ENCODE measurements at regions of chr5 and their contacts with region 1.

Region 1: GRCh38 chr5:54310433-54311175 is at the start of gene ARL15:
- DNase-seq: peak; percentile 97
- H3K4me3 ChIP-seq: peak within 1 kb of the TSS; percentile 75 to 91 (median 79)
- H3K27ac ChIP-seq: peak within 1 kb of the TSS; percentile 79
- H3K4me1 ChIP-seq: peaks cover 12% of the 10 kb centered on the region
- H3K27me3 ChIP-seq: no peaks in the 10 kb centered on the region
- CTCF ChIP-seq: peak in 1 of 2 donors; percentile 1
- total RNA-seq, gene ARL15: 31.5 to 40.0 TPM

Region 2: DNA sequence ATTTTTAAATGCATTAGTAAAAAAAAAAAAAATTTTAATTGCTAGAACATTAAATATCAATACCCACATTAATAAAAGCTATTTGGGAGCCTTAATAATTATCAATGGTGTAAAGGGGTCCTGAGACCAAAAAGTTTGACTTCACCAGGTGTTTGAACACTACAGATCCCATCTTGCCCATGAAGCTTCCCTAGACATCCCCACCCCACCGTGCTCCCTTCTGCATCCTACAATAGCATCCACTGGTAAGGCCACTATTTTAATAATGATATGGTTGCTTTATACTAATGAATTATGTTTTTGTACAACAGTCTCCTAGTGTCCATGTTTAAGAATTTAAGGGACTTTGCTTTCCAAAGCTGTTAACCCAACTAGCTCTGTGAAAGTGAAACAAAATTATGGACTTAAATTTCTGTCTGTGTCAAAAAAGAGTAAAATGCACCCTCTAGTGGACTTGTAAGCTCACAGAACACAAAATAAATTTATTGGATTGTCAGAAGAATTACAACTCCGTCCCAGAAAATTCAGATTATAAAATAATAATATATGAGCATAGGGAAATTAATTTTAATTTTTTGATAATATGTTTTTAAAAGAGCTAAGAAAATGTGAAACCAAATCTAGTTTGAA is 76.2 kb before region 1 on chr5:
- CTCF ChIA-PET with region 1: interaction called, 12 read pairs
- dilution Hi-C with region 1: no loop called
- in situ Hi-C with region 1: no loop called
- intact Hi-C with region 1: no loop called
- DNase-seq: peak; percentile 8
- H3K4me3 ChIP-seq: no peak overlapping the region
- H3K27ac ChIP-seq: no peak overlapping the region
- H3K4me1 ChIP-seq: no peaks in the 10 kb centered on the region
- H3K27me3 ChIP-seq: no peaks in the 10 kb centered on the region
- CTCF ChIP-seq: peak; percentile 34 to 53

Region 3: GRCh38 chr5:54249210-54250028 is 61.2 kb before region 1 on chr5:
- CTCF ChIA-PET with region 1: no interaction called
- dilution Hi-C with region 1: no loop called
- in situ Hi-C with region 1: loop called in 1 of 2 experiments (anchors 10 kb)
- intact Hi-C with region 1: no loop called
- DNase-seq: no peak
- H3K4me3 ChIP-seq: no peak overlapping the region
- H3K27ac ChIP-seq: no peak overlapping the region
- H3K4me1 ChIP-seq: no peaks in the 10 kb centered on the region
- H3K27me3 ChIP-seq: no peaks in the 10 kb centered on the region
- CTCF ChIP-seq: no peak

Region 4: GRCh38 chr5:54360089-54360488 is 49.5 kb after region 1 on chr5:
- CTCF ChIA-PET with region 1: no interaction called
- dilution Hi-C with region 1: no loop called
- in situ Hi-C with region 1: no loop called
- intact Hi-C with region 1: loop called (anchors 5 kb)
- DNase-seq: peak; percentile 77
- H3K4me3 ChIP-seq: no peak overlapping the region
- H3K27ac ChIP-seq: no peak overlapping the region
- H3K4me1 ChIP-seq: peaks cover 18% of the 10 kb centered on the region
- H3K27me3 ChIP-seq: no peaks in the 10 kb centered on the region
- CTCF ChIP-seq: no peak

Region 5: DNA sequence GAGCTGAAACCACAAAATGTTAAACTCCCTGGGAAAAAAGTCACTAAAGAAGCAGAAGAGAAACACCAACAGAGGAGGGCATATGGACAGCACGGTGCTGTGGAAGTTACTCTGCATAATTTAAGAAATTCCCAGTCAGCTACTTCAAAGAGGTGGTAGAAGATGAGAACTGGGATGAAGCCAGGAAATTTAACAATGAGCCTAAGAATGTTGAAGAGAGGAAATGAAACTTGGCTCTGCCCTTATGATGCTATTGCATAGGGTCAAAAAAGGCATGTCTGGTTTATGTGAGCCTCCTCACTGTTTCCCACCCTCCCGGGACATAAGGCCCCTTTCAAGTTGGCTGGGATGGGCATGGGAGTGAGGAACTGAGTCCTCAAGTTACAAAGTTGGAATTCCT is 181.6 kb after region 1 on chr5:
- CTCF ChIA-PET with region 1: interaction called, 5 read pairs
- dilution Hi-C with region 1: no loop called
- in situ Hi-C with region 1: no loop called
- intact Hi-C with region 1: loop called (anchors 1 kb)
- DNase-seq: peak; percentile 3
- H3K4me3 ChIP-seq: no peak overlapping the region
- H3K27ac ChIP-seq: no peak overlapping the region
- H3K4me1 ChIP-seq: no peaks in the 10 kb centered on the region
- H3K27me3 ChIP-seq: peaks cover 3% of the 10 kb centered on the region
- CTCF ChIP-seq: no peak

Region 6: DNA sequence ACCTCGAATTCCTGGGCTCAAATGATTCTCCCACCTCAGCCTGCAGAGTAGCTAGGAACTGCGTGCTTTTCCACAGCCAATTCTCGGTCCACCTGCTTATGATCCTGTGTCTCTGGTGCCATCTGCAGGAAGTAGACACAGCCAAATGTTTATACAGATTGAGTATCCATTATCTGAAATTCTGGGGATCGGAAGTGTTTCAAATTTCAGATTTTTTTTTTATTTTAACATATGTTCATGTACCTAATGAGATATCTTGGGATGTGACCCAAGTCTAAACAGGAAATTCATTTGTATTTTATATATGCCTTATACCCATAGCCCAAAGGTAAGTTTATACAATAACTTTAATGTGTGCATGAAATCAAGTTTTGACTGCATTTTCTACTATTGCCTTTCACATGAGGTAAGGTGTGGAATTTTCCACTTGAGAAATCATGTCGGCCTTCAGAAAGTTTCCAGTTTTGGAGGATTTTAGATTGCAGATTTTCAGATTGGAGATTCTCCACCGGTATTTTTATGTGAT is 585.3 kb after region 1 on chr5:
- CTCF ChIA-PET with region 1: no interaction called
- dilution Hi-C with region 1: no loop called
- in situ Hi-C with region 1: no loop called
- intact Hi-C with region 1: loop called (anchors 2 kb)
- DNase-seq: peak; percentile 42
- H3K4me3 ChIP-seq: no peak overlapping the region
- H3K27ac ChIP-seq: no peak overlapping the region
- H3K4me1 ChIP-seq: no peaks in the 10 kb centered on the region
- H3K27me3 ChIP-seq: peaks cover 4% of the 10 kb centered on the region
- CTCF ChIP-seq: peak; percentile 48 to 71

Measured in mammary epithelial cell (primary cell).